ENCODE measurements at regions of chr5 and their contacts with region 1.

Region 1: DNA sequence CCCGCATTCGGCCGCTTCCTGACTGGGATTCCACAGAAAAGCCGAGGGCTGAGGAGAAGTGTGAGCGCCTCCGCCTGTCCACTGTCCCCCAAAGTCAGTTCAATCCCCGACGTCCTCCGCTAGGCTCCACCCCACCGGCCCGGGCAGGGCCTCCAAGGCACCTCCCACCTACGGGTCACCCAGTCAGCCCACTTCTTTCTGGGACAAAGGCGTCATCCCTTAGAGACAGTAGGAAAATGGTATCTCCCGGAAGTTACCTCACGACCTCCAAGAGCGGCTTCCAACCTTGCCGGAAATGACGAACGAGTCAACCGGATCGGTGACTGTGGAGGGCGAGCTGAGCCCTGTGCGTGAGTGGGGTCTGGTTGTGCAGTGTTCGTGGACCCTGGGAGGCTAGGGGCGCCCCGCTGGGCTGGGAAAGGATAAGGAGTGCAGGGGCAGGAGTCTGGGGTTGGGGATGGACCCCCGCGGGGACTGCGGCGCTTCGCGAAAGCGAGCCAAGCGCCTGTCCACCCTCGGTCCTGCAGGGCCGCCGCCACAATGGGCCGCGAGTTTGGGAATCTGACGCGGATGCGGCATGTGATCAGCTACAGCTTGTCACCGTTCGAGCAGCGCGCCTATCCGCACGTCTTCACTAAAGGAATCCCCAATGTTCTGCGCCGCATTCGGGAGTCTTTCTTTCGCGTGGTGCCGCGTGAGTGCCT is at the starts of genes GDF9 and UQCRQ:
- DNase-seq: peak; percentile 99
- H3K4me3 ChIP-seq: peak within 1 kb of the TSS; percentile 14 to 89 (median 76)
- H3K27ac ChIP-seq: peak within 1 kb of the TSS; percentile 78
- H3K4me1 ChIP-seq: peaks cover 12% of the 10 kb centered on the region
- H3K27me3 ChIP-seq: peaks cover 0 to 6% of the 10 kb centered on the region in 2 experiments
- CTCF ChIP-seq: peak in 1 of 2 donors; percentile 43
- POLR2A ChIP-seq: peak; percentile 94
- total RNA-seq, gene GDF9: 0.32 TPM in 1 of 2 replicates, not detected in the other
- total RNA-seq, gene UQCRQ: 390 and 458 TPM in 2 replicates

Region 2: GRCh38 chr5:132410451-132411381 is 455.8 kb before region 1 on chr5:
- CTCF ChIA-PET with region 1: no interaction called
- POLR2A ChIA-PET with region 1: no interaction called
- dilution Hi-C with region 1: no loop called
- intact Hi-C with region 1: loop called (anchors 1 kb)
- DNase-seq: peak; percentile 79
- H3K4me3 ChIP-seq: peak overlapping the region; percentile 69 to 77 (median 76)
- H3K27ac ChIP-seq: peak overlapping the region; percentile 92
- H3K4me1 ChIP-seq: peaks cover 46% of the 10 kb centered on the region
- H3K27me3 ChIP-seq: no peaks in the 10 kb centered on the region
- CTCF ChIP-seq: peak; percentile 72 to 82
- POLR2A ChIP-seq: peak; percentile 48

Region 3: GRCh38 chr5:132736853-132737833 is 129.4 kb before region 1 on chr5 and contains the start of gene KIF3A:
- CTCF ChIA-PET with region 1: no interaction called
- POLR2A ChIA-PET with region 1: no interaction called
- dilution Hi-C with region 1: no loop called
- intact Hi-C with region 1: loop called (anchors 5 kb)
- DNase-seq: peak; percentile 96
- H3K4me3 ChIP-seq: peak within 1 kb of the TSS; percentile 54 to 79 (median 72)
- H3K27ac ChIP-seq: no peak within 1 kb of the TSS
- H3K4me1 ChIP-seq: peaks cover 11% of the 10 kb centered on the region
- H3K27me3 ChIP-seq: peaks cover 1 to 4% of the 10 kb centered on the region in 2 experiments
- CTCF ChIP-seq: no peak
- POLR2A ChIP-seq: peak; percentile 80
- total RNA-seq, gene KIF3A: 11.2 and 15.8 TPM in 2 replicates

Region 4: DNA sequence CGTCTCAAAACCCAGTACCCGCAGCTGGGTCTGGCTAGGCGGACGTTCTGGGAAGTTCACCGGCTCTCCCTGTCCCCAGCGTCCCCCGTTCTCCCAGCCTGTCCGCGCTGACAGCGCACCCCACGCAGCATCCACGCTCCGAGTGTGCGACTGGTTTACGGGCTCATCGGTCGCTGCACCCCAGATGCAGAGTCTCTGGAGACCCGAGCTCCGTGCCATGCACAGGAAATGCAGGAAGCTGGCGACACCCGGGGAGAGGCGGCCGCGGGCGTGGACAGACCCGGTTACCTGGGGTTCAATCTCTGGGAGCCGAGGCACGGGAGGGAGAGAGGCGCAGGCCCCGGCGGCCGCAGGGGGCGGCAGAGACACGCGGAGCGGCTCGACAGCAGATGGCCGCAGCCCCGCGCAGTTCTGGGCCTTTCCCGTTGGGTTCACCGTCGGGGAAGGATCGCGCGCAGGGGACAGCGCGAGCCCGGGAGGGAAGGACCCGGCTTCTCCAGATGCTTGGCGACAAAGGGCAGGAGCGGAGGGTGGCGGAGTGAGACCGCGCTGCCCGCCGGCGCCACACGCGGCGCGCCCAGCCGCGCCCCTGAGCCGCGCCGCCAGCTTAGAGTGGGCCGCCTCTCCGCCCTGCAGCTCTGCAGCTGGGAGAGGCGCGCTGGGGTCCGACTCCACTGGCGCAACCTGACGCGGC is 36.6 kb before region 1 on chr5:
- CTCF ChIA-PET with region 1: interaction called, 36 read pairs
- POLR2A ChIA-PET with region 1: interaction called, 3 read pairs
- dilution Hi-C with region 1: no loop called
- intact Hi-C with region 1: loop called (anchors 1 kb)
- DNase-seq: peak; percentile 75
- H3K4me3 ChIP-seq: peak overlapping the region; percentile 41 to 59 (median 49)
- H3K27ac ChIP-seq: peak overlapping the region; percentile 32
- H3K4me1 ChIP-seq: peaks cover 12% of the 10 kb centered on the region
- H3K27me3 ChIP-seq: no peaks in the 10 kb centered on the region
- CTCF ChIP-seq: peak; percentile 92 to 99
- POLR2A ChIP-seq: peak; percentile 28

Region 5: GRCh38 chr5:132839426-132840301 is 26.8 kb before region 1 on chr5:
- CTCF ChIA-PET with region 1: interaction called, 19 read pairs
- POLR2A ChIA-PET with region 1: no interaction called
- dilution Hi-C with region 1: no loop called
- intact Hi-C with region 1: loop called (anchors 1 kb)
- DNase-seq: peak; percentile 93
- H3K4me3 ChIP-seq: peak overlapping the region in 1 of 3 experiments; percentile 13
- H3K27ac ChIP-seq: peak overlapping the region; percentile 76
- H3K4me1 ChIP-seq: peaks cover 22% of the 10 kb centered on the region
- H3K27me3 ChIP-seq: no peaks in the 10 kb centered on the region
- CTCF ChIP-seq: no peak
- POLR2A ChIP-seq: no peak

Region 6: GRCh38 chr5:132854301-132854700 is 12.2 kb before region 1 on chr5:
- CTCF ChIA-PET with region 1: interaction called, 13 read pairs
- POLR2A ChIA-PET with region 1: interaction called, 4 read pairs
- dilution Hi-C with region 1: no loop called
- intact Hi-C with region 1: no loop called
- DNase-seq: peak; percentile 73
- H3K4me3 ChIP-seq: no peak overlapping the region
- H3K27ac ChIP-seq: no peak overlapping the region
- H3K4me1 ChIP-seq: no peaks in the 10 kb centered on the region
- H3K27me3 ChIP-seq: no peaks in the 10 kb centered on the region
- CTCF ChIP-seq: no peak
- POLR2A ChIP-seq: no peak

Region 7: GRCh38 chr5:133307275-133307674 is 440.8 kb after region 1 on chr5:
- CTCF ChIA-PET with region 1: no interaction called
- POLR2A ChIA-PET with region 1: no interaction called
- dilution Hi-C with region 1: no loop called
- intact Hi-C with region 1: no loop called
- DNase-seq: no peak
- H3K4me3 ChIP-seq: no peak overlapping the region
- H3K27ac ChIP-seq: no peak overlapping the region
- H3K4me1 ChIP-seq: no peaks in the 10 kb centered on the region
- H3K27me3 ChIP-seq: peaks cover 2% of the 10 kb centered on the region in 2 experiments
- CTCF ChIP-seq: no peak
- POLR2A ChIP-seq: no peak

Measured in endothelial cell of umbilical vein (primary cell).